OCI-LY7 (cell line): ENCODE measurements at regions of chr7 and their contacts with region 1.

Region 1: GRCh38 chr7:137985253-137985896 is 16.5 kb downstream of the CREB3L2 start:
- DNase-seq: peak; percentile 90
- H3K4me3 ChIP-seq: peak overlapping the region; percentile 52
- H3K27ac ChIP-seq: peak overlapping the region; percentile 100
- H3K4me1 ChIP-seq: peaks cover 92% of the 10 kb centered on the region
- CTCF ChIP-seq: no peak

Region 2: DNA sequence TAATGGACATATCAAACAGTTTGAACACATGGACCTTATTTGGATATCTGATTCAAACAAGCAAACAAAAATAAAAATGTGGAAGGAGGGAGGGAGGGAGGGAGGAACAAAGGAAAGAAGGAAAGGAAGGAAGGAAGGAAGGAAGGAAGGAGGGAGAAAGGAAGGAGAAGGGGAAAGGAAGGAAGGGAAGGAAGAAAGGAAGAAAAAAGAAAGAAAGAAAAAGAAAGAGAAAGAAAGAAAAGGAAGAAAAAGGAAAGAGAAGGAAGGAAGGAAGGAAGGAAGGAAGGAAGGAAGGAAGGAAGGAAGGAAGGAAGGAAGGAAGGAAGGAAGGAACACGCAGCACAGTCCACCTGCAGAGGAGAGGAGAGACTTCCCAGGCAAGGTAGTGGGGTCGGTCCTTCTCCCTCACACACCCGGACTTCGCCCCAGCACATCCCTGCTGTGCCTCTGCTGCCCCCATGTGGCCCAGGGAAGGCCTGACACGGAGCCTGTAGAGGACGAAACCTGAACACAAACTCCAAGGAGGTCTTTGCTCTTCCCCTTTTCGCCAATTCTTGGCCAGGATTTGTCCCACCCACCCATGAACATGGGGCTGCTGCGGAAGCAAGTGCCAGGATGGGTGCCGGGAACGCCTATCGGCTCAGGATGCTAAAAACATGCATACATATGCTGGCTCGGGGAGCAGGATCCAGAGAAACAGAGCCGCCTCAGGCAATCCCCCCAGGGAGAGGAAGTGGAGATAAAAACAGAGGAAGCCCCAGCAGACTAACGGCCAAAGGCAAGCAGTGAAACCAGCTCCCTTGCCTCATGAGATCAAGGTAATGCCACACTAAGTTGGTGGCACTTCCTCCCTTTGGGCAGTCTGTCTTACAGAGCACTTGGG is 86.3 kb before region 1 on chr7:
- CTCF ChIA-PET with region 1: interaction called, 3 read pairs
- POLR2A ChIA-PET with region 1: interaction called, 3 read pairs
- intact Hi-C with region 1: loop called (anchors 1 kb)
- DNase-seq: peak; percentile 75
- H3K4me3 ChIP-seq: peak overlapping the region; percentile 22
- H3K27ac ChIP-seq: peak overlapping the region; percentile 37
- H3K4me1 ChIP-seq: peaks cover 20% of the 10 kb centered on the region
- CTCF ChIP-seq: peak; percentile 88

Region 3: DNA sequence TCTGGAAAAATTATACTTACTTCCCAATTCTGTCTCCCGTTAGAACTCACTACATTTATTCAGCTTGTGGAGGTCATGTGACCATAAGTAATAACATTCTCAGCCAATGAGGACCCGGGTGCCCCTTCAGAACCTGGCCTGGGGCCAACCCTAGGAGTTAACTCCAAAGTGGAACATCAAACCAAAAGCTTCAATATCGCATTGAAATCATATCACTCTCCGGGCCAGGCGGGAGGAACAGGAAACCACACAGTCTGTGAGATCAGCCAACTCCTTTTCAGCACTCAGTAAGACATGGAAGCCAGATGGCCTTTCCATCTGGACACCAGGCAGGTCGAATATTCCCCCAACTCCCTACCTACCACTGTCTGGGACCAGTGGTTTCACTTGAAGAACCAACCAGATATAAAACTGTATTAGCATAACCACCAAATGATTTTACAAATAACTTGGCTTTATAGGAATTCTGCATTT is 11.0 kb after region 1 on chr7:
- CTCF ChIA-PET with region 1: interaction called, 8 read pairs
- POLR2A ChIA-PET with region 1: interaction called, 65 read pairs
- intact Hi-C with region 1: loop called (anchors 1 kb)
- DNase-seq: no peak
- H3K4me3 ChIP-seq: no peak overlapping the region
- H3K27ac ChIP-seq: no peak overlapping the region
- H3K4me1 ChIP-seq: peaks cover 50% of the 10 kb centered on the region
- CTCF ChIP-seq: no peak

Region 4: DNA sequence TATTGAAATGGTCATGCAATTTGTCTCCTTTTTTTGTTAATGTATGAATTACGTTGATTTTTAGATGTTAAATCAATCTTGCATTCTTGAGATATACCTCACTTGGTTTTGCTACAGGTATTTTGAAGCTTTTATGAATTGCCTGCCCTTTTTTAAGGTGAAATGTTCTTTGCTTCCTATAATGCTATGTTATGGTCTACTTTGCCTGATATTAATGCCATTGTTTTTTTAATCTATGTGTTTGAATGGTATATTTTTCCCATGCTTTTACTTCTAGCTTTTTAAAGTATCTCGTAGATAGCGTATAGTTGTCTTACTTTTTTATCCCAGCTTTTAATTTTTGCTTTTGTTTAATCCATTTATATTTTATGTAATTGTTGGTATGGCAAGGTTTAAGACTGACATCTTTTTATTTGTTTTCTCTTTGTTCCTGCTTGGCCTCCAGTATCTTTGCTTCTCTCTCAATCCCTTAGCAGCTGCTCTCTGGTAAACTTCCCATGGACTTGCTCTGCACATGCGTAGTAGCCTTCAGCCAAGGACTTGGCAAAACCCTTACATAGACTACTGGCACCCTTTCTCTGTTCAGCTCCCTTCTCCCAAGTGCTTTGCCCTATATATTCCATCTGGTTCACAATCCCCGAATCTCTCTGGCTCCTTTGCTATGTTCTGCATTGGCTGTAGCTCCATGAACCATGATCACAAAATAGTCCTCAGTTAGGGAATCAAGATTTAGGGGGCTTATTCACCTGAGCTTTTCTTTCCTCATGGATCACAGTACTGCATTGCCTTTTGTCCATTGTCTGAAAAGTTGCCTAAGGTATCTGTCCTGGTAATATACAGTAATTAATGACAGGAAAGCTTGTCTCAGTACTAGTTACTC is 483.1 kb after region 1 on chr7:
- CTCF ChIA-PET with region 1: no interaction called
- POLR2A ChIA-PET with region 1: no interaction called
- intact Hi-C with region 1: loop called (anchors 5 kb)
- DNase-seq: no peak
- H3K4me3 ChIP-seq: no peak overlapping the region
- H3K27ac ChIP-seq: no peak overlapping the region
- H3K4me1 ChIP-seq: no peaks in the 10 kb centered on the region
- CTCF ChIP-seq: no peak

Region 5: DNA sequence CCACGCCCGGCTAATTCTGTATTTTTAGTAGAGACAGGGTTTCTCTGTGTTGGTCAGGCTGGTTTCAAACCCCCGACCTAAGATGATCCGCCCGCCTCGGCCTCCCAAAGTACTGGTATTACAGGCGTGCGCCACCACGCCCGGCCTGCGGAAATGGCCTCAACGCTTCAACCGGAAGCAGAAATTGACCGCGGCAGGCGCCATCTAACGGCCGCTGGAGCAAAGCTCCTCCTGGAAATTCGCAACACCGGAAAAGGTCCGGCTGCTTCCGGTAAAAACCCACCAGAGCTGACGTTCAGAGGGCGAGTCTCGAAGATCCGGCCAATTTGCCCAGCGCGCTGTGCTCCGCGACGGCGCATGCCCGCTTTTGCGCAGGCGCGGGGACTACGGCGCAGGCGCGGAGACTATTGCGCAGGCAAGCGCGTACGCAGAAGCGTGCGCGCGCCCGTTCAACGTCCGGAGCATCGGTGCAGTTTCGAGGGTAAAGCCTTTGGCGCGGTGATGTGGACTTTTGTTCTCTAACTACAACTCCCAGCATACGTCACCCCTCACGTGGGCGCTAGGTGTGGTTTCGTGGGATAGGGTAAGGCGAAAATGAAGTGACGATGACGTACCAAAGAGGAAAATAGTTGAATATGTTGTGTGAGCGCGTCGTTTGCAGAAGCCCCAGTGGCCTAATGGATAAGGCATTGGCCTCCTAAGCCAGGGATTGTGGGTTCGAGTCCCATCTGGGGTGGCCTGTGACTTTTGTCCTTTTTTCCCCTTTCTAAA is 1354.8 kb after region 1 on chr7:
- CTCF ChIA-PET with region 1: no interaction called
- POLR2A ChIA-PET with region 1: no interaction called
- intact Hi-C with region 1: loop called (anchors 5 kb)
- DNase-seq: peak; percentile 99
- H3K4me3 ChIP-seq: peak overlapping the region; percentile 90
- H3K27ac ChIP-seq: peak overlapping the region; percentile 94
- H3K4me1 ChIP-seq: peaks cover 15% of the 10 kb centered on the region
- CTCF ChIP-seq: peak; percentile 81